MCF 10A (cell line): ENCODE measurements at regions of chr14 and their contacts with region 1.

Region 1: GRCh38 chr14:39169541-39169900 is 612 bp downstream of the TRAPPC6B start:
- DNase-seq: peak; percentile 31
- H3K4me3 Mint-ChIP-seq: peak overlapping the region; percentile 83
- H3K27ac Mint-ChIP-seq: peak overlapping the region; percentile 93
- H3K4me1 Mint-ChIP-seq: peaks cover 14% of the 10 kb centered on the region
- H3K27me3 Mint-ChIP-seq: no peaks in the 10 kb centered on the region
- CTCF ChIP-seq: no peak

Region 2: GRCh38 chr14:38553586-38553985 is 615.9 kb before region 1 on chr14:
- CTCF ChIA-PET with region 1: no interaction called
- POLR2A ChIA-PET with region 1: no interaction called
- intact Hi-C with region 1: no loop called
- DNase-seq: no peak
- H3K4me3 Mint-ChIP-seq: no peak overlapping the region
- H3K27ac Mint-ChIP-seq: no peak overlapping the region
- H3K4me1 Mint-ChIP-seq: peaks cover 6% of the 10 kb centered on the region
- H3K27me3 Mint-ChIP-seq: no peaks in the 10 kb centered on the region
- CTCF ChIP-seq: no peak

Region 3: DNA sequence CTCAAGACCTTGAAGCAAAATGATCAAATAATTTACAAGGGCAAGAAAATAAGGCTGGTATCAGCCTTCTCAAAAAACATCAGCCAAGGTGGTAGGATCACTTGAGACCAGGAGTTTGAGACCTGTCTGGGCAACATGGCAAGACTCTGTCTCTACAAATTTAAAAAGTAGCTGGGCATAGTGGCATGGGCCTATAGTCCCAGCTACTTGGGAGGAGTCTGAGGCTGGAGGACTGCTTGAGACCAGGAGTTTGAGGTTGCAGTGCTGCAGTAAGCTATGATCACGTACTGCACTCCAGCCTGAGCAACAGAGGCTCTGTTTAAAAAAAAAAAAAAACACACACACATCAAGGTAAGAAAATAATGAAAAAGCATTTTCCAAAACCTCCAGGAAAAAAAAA is 88.6 kb before region 1 on chr14:
- CTCF ChIA-PET with region 1: no interaction called
- POLR2A ChIA-PET with region 1: no interaction called
- intact Hi-C with region 1: no loop called
- DNase-seq: no peak
- H3K4me3 Mint-ChIP-seq: no peak overlapping the region
- H3K27ac Mint-ChIP-seq: no peak overlapping the region
- H3K4me1 Mint-ChIP-seq: no peaks in the 10 kb centered on the region
- H3K27me3 Mint-ChIP-seq: no peaks in the 10 kb centered on the region
- CTCF ChIP-seq: no peak

Region 4: GRCh38 chr14:39102969-39103957 is 66.3 kb before region 1 on chr14 and contains the start of gene SEC23A:
- CTCF ChIA-PET with region 1: no interaction called
- POLR2A ChIA-PET with region 1: interaction called, 16 read pairs
- intact Hi-C with region 1: no loop called
- DNase-seq: peak; percentile 88
- H3K4me3 Mint-ChIP-seq: peak within 1 kb of the TSS; percentile 95
- H3K27ac Mint-ChIP-seq: peak within 1 kb of the TSS; percentile 98
- H3K4me1 Mint-ChIP-seq: peaks cover 16% of the 10 kb centered on the region
- H3K27me3 Mint-ChIP-seq: no peaks in the 10 kb centered on the region
- CTCF ChIP-seq: no peak
- total RNA-seq, gene SEC23A: 79.3 and 82.4 TPM in 2 replicates

Region 5: DNA sequence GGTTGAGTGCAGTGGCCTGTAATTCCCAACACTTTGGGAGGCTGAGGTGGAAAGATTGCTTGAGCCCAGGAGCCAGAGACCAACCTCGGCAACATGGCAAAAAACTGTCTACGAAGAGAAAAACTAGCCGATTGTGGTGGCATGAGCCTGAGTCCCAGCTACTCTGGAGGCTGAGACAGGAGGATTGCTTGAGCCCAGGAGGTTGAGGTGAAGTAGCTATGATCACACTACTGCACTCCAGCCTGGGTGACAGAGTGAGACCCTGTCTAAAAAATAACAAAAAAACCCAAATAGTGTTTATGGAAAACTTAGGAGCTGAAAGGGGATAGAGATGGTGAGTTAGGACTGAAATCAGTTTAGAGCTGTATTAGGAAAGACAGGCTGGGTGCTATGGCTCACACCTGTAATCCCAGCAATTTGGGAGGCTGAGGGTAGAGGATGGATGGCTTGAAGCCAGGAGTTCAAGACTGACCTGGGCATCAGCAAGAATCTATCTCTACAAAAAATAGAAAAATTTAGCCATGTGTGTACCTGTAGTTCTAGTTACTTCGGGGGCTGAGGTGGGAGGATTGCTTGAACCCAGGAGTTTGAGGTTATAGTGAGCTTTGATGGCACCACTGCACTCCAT is 15.2 kb after region 1 on chr14:
- CTCF ChIA-PET with region 1: no interaction called
- POLR2A ChIA-PET with region 1: interaction called, 18 read pairs
- intact Hi-C with region 1: no loop called
- DNase-seq: no peak
- H3K4me3 Mint-ChIP-seq: no peak overlapping the region
- H3K27ac Mint-ChIP-seq: no peak overlapping the region
- H3K4me1 Mint-ChIP-seq: peaks cover 19% of the 10 kb centered on the region
- H3K27me3 Mint-ChIP-seq: no peaks in the 10 kb centered on the region
- CTCF ChIP-seq: no peak

Region 6: DNA sequence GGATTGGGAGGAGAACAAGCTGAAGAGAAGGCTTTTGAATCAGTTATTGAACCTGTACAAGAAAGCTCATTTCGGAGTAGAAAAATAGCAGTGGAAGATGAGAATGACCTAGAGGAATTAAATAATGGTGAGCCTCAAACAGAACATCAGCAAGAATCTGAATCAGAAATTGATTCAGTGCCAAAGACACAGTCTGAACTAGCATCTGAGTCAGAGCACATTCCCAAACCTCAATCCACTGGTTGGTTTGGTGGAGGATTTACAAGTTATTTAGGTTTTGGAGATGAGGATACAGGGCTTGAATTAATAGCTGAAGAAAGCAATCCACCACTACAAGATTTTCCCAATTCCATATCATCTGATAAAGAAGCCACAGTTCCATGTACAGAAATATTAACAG is 77.7 kb after region 1 on chr14:
- CTCF ChIA-PET with region 1: no interaction called
- POLR2A ChIA-PET with region 1: interaction called, 11 read pairs
- intact Hi-C with region 1: no loop called
- DNase-seq: peak; percentile 73
- H3K4me3 Mint-ChIP-seq: no peak overlapping the region
- H3K27ac Mint-ChIP-seq: peak overlapping the region; percentile 13
- H3K4me1 Mint-ChIP-seq: peaks cover 12% of the 10 kb centered on the region
- H3K27me3 Mint-ChIP-seq: no peaks in the 10 kb centered on the region
- CTCF ChIP-seq: no peak

Region 7: GRCh38 chr14:39861229-39861600 is 691.7 kb after region 1 on chr14:
- CTCF ChIA-PET with region 1: no interaction called
- POLR2A ChIA-PET with region 1: no interaction called
- intact Hi-C with region 1: no loop called
- DNase-seq: no peak
- H3K4me3 Mint-ChIP-seq: no peak overlapping the region
- H3K27ac Mint-ChIP-seq: no peak overlapping the region
- H3K4me1 Mint-ChIP-seq: no peaks in the 10 kb centered on the region
- H3K27me3 Mint-ChIP-seq: peaks cover 76% of the 10 kb centered on the region
- CTCF ChIP-seq: no peak